ENCODE measurements at regions of chr7 and their contacts with region 1.

Region 1: DNA sequence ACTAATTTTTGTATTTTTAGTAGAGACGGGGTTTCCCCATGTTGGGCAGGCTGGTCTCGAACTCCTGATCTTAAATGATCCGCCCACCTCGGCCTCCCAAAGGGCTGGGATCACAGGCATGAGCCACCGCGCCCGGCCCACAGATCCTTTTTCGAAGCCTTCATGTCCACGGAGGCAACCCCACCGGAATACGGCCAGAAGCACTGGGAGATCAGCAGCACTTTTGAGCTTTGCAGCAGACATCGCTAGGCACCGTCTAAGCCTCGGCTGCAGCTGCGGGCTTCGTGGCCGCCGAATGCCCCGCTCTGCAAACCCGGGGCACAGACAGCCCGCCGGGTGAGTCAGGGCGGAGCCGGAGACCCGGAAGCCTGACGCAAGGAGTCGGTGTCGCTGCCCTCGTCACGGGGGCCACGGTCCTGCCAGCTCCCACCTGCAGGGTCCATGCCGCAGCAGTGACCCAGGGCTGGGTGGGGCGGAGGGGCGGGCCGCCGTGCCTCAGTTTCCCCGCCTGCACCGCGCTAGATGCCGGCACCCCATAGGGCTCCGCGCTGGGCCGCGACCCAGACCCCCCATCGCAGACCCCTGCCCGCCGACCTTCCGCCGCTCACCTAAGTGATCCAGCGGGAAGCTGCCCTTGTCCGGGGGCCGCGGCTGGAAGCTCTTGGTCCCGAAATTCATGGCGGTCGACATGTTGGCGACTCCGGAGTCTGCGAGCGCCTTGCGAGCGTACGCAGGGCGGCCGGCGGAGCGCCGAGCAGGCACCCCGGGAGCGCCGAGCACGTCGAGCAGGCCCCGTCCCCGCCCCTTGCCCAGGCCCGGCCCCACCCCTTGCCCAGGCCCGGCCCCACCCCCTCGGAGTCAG is at the start of gene COX19:
- DNase-seq: peak; percentile 90
- H3K4me3 Mint-ChIP-seq: peak within 1 kb of the TSS; percentile 90
- H3K27ac Mint-ChIP-seq: peak within 1 kb of the TSS; percentile 86
- H3K4me1 Mint-ChIP-seq: peaks cover 31% of the 10 kb centered on the region
- H3K27me3 Mint-ChIP-seq: no peaks in the 10 kb centered on the region
- total RNA-seq, gene COX19: 17.4 to 18.2 TPM

Region 2: DNA sequence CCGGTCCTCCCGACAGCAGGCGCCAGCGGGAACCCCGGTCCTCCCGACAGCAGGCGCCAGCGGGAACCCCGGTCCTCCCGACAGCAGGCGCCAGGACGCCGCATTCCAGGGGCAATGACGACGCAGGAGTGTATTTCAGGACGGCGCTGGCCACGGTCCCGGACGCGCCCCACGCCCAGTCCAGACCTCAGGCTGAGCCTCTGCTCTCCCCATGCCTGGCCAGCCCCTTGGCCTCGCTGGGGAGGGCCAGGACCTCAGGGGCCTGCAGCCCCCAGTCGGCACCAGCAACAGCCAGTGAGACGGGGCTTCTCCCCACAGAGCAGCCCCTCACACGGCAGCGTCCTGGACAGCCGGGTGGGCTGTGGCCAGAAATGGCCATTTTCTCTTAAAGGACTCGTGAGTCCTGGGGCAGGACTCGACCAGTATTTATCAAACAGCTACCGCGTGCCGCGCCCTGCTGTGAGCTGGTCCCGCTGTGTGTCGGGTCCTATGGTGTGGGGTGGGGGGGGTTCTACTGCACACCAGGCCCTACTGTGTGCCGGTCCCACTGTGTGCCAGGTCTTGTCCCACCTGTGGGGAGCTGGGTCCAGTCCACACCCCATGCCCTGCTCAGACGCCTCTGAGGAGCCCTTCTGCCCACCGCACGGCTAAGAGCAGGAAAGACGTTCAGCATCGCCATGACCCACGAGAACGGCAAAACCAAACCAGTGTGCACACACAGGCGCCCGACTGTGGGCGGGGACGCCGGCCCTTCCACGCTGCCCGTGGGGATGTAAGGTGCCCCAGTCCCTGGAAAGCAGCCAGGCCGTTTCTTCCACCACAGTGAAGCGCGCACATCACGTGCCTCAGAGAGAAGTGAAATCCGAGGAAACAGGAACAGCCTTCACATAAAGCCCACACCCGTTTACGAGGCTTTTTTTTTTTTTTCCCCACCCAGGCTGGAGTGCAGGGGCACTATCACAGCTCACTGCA is 65.4 kb before region 1 on chr7:
- CTCF ChIA-PET with region 1: interaction called, 21 read pairs
- POLR2A ChIA-PET with region 1: interaction called, 15 read pairs
- DNase-seq: no peak
- H3K4me3 Mint-ChIP-seq: no peak overlapping the region
- H3K27ac Mint-ChIP-seq: no peak overlapping the region
- H3K4me1 Mint-ChIP-seq: peaks cover 9% of the 10 kb centered on the region
- H3K27me3 Mint-ChIP-seq: peaks cover 9% of the 10 kb centered on the region

Region 3: GRCh38 chr7:923108-924041 is 51.7 kb before region 1 on chr7:
- CTCF ChIA-PET with region 1: interaction called, 4 read pairs
- POLR2A ChIA-PET with region 1: interaction called, 54 read pairs
- DNase-seq: peak; percentile 97
- H3K4me3 Mint-ChIP-seq: peak overlapping the region; percentile 78
- H3K27ac Mint-ChIP-seq: peak overlapping the region; percentile 92
- H3K4me1 Mint-ChIP-seq: peaks cover 42% of the 10 kb centered on the region
- H3K27me3 Mint-ChIP-seq: peaks cover 16% of the 10 kb centered on the region

Region 4: DNA sequence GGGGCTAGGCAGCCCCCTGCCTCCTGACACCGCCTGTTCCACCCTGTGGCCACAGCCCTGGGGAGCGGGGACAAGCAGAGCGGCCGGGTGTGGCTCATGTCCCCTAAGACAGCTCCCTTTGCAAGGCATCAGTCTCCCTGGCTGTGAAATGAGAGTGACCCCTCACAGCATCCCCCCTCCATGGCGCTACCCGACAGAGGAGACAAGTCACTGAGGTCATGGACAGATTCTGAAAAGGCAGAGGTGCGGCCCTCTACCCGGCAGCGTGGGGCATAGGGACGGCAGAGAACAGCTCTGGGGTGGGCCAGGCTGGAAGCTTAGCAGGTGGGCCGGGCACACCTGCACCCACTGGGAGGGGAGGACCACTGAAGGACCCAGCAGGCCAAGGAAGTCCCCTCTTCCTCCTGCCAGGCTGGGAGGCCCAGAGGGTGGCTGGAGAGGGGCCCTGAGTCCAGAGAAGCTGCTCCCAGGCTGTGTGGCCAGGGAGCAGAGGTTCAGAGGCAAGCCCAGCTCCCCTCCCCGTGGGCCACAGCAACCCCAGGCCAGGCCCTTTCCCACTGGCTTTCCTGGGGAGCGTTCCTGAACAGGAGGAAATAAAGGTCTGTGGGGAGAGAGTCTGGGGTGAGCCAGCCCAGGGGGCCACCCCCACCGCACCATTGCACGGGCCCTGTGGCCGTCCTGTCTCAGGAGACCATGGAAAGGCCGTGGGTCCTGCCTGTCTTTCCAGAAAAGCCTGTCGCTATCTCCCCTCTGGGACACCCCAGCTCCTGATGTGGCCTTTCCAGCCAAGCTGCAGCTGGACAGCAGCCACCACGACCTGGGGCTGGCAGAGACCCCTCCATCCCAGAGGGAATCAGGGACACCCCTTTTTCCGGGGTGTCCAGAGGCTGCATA is 22.3 kb before region 1 on chr7:
- CTCF ChIA-PET with region 1: no interaction called
- POLR2A ChIA-PET with region 1: interaction called, 14 read pairs
- DNase-seq: no peak
- H3K4me3 Mint-ChIP-seq: no peak overlapping the region
- H3K27ac Mint-ChIP-seq: no peak overlapping the region
- H3K4me1 Mint-ChIP-seq: peaks cover 13% of the 10 kb centered on the region
- H3K27me3 Mint-ChIP-seq: peaks cover 17% of the 10 kb centered on the region

Region 5: DNA sequence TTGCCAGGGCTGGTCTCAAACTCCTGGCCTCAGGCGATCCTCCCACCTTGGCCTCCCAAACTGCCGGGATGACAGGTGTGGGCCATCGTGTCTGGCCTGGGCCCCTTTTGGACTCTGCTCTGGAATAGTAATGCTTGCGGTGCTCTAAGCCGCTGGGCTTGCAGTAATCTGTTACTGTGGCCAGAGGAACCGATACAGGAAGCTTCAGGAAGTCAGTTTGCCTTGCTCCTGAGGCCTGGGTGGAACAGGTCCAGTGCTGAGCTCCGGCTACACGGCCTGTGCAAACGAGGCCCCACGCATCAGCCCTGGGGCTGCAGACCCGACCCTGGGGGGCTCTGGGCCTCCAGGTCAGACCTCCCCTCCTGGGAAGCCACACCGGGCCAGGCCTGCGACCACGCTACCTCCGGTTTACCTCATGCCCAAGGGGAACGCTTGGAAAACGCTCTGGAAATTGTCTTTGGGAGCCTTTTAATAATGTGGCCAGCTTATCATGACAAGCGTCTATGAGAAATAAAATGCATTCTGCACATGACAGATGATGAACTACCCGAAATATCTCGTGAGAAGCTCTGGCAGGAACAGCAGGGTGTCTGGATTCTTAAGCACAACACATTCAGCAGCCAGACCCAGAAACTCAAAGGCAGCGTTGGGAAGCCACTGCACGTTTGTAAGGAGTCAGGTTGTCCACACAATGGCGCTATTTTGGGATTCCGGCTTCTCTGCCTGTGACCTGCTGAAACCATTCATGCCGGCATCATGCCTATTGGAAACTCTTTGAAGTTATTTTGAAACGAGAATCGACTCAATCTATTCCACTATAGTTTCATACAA is 10.4 kb before region 1 on chr7:
- CTCF ChIA-PET with region 1: interaction called, 3 read pairs
- POLR2A ChIA-PET with region 1: interaction called, 13 read pairs
- DNase-seq: no peak
- H3K4me3 Mint-ChIP-seq: no peak overlapping the region
- H3K27ac Mint-ChIP-seq: no peak overlapping the region
- H3K4me1 Mint-ChIP-seq: peaks cover 15% of the 10 kb centered on the region
- H3K27me3 Mint-ChIP-seq: peaks cover 13% of the 10 kb centered on the region

Region 6: GRCh38 chr7:1044191-1045068 is 69.4 kb after region 1 on chr7 and contains the start of gene GPR146:
- CTCF ChIA-PET with region 1: no interaction called
- POLR2A ChIA-PET with region 1: interaction called, 11 read pairs
- DNase-seq: peak; percentile 93
- H3K4me3 Mint-ChIP-seq: peak within 1 kb of the TSS; percentile 89
- H3K27ac Mint-ChIP-seq: peak within 1 kb of the TSS; percentile 87
- H3K4me1 Mint-ChIP-seq: peaks cover 71% of the 10 kb centered on the region
- H3K27me3 Mint-ChIP-seq: no peaks in the 10 kb centered on the region
- total RNA-seq, gene GPR146: 10.0 to 10.1 TPM

Region 7: DNA sequence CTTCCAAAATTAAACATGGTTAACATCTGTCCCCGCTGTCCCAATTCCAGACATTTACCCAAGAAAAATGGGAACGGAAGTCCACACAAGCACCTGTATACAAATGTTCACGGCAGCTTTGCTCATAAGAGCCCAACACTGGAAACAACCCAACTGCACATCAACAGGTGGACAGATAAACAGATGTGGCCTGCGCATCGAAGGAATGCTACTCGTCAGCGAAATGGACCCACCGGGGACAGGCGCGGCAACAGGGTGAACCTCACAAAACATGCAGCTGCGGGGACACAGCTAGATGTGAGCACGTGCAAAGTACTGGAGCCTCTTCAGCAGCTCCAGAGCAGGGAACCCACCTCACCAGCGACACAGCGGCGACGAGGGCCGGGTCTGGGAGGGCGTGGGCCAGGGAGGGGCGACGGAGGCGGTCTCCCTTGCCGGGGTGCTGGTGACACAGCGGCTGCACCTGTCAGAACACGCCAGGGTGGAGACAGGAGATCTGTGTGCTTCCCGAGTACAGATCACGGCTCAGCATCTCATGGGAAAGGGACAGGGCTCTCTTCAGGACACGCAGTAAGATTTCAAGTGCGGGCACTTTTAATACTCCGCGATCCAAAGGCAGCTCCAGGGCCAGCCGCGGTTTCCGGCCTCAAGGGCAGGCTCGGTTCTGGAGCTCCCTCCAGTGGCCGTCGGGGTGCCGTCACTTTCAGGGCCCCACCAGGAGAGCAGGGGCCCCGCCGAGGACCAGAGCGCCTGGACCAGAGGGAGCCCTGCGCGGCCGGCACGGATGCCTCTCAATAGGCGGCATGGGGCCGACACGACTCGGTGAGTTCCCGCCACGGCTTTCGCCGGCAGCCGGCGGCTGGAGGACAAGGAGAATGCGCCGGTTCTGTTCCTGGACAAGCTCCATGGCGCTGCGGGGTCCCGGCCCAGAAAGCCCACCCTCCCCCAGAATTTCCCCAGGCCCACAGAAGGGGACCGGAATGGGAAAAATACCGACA is 90.5 kb after region 1 on chr7:
- CTCF ChIA-PET with region 1: interaction called, 12 read pairs
- POLR2A ChIA-PET with region 1: interaction called, 8 read pairs
- DNase-seq: peak; percentile 89
- H3K4me3 Mint-ChIP-seq: no peak overlapping the region
- H3K27ac Mint-ChIP-seq: no peak overlapping the region
- H3K4me1 Mint-ChIP-seq: peaks cover 6% of the 10 kb centered on the region
- H3K27me3 Mint-ChIP-seq: peaks cover 1% of the 10 kb centered on the region